Activated naive CD8-positive, alpha-beta T cell treated with anti-CD3 and anti-CD28 coated beads, Interleukin-2, amount 10 ng/mL, durations not matched to agents 7 days and 5 days (primary cell): ENCODE measurements at regions of chr20 and their contacts with region 1.

Region 1: DNA sequence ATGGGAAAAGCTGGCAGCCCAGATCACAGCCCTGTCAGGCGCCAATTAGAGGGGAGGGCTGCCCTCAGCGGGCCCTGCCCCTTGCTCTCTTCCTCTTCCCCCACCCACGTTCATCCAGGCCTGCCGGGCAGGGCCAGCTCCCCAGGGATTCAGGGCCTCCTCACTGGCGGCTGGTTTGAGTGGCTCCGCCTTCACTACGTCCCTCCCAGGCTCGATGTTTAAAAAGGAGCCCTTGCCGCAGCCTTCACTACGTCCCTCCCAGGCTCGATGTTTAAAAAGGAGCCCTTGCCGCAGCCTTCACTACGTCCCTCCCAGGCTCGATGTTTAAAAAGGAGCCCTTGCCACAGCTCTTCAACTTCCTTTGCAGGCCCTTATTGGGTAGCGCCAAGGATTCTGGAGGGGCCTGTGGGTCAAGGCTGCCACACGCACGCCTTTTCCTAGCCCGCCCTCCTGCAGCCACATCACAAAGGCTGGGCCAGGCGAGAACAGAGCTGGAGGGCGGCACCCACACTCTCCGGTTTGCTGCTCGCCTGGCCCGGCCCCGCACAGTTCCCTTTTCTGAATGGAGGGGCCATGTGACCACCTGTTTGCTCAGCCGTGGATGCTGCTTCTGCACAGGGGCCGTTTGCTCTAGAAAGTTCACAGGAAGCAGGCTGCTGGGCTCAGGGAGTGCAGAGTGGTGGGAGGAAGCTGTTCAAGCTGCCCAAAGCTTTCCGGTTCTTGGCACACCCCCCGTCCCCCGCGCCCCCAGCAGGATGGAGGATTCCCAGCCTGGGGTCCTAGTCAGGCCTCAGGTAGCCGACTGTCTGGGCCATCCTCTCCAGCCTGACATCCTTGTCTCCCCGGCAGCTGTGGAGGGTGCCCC is 1.6 kb downstream of the SLC17A9 start:
- DNase-seq: peak; percentile 85
- ATAC-seq: peak; percentile 93
- H3K4me3 Mint-ChIP-seq: peak overlapping the region; percentile 85
- H3K27ac Mint-ChIP-seq: peak overlapping the region; percentile 93
- H3K4me1 Mint-ChIP-seq: peaks cover 21% of the 10 kb centered on the region
- H3K27me3 Mint-ChIP-seq: no peaks in the 10 kb centered on the region

Region 2: GRCh38 chr20:62937366-62938104 is 16.5 kb before region 1 on chr20:
- POLR2A ChIA-PET with region 1: interaction called, 34 read pairs
- DNase-seq: peak; percentile 99
- ATAC-seq: peak; percentile 85
- H3K4me3 Mint-ChIP-seq: no peak overlapping the region
- H3K27ac Mint-ChIP-seq: peak overlapping the region; percentile 97
- H3K4me1 Mint-ChIP-seq: peaks cover 25% of the 10 kb centered on the region
- H3K27me3 Mint-ChIP-seq: no peaks in the 10 kb centered on the region